ENCODE measurements at regions of chr2 and their contacts with region 1.

Region 1: GRCh38 chr2:9326975-9327374 is 96.4 kb downstream of the ITGB1BP1 start:
- DNase-seq: no peak
- ATAC-seq: no peak

Region 2: GRCh38 chr2:9205963-9206948 is 120.7 kb before region 1 on chr2 and contains the start of gene ASAP2:
- intact Hi-C with region 1: loop called (anchors 10 kb)
- DNase-seq: peak; percentile 87
- ATAC-seq: peak; percentile 85
- total RNA-seq, gene ASAP2: 10.1 TPM